ENCODE measurements at regions of chr2 and their contacts with region 1.

Region 1: GRCh38 chr2:55050133-55050994 is at the start of gene RTN4:
- DNase-seq: peak; percentile 99
- H3K4me3 Mint-ChIP-seq: peak within 1 kb of the TSS; percentile 85
- H3K27ac Mint-ChIP-seq: peak within 1 kb of the TSS; percentile 97
- H3K4me1 Mint-ChIP-seq: peaks cover 31% of the 10 kb centered on the region
- H3K27me3 Mint-ChIP-seq: no peaks in the 10 kb centered on the region
- CTCF ChIP-seq: no peak
- total RNA-seq, gene RTN4: 386 and 394 TPM in 2 replicates

Region 2: GRCh38 chr2:54979321-54980041 is 70.9 kb before region 1 on chr2:
- CTCF ChIA-PET with region 1: no interaction called
- intact Hi-C with region 1: no loop called
- DNase-seq: peak; percentile 58
- H3K4me3 Mint-ChIP-seq: no peak overlapping the region
- H3K27ac Mint-ChIP-seq: peak overlapping the region; percentile 51
- H3K4me1 Mint-ChIP-seq: peaks cover 49% of the 10 kb centered on the region
- H3K27me3 Mint-ChIP-seq: no peaks in the 10 kb centered on the region
- CTCF ChIP-seq: no peak

Region 3: DNA sequence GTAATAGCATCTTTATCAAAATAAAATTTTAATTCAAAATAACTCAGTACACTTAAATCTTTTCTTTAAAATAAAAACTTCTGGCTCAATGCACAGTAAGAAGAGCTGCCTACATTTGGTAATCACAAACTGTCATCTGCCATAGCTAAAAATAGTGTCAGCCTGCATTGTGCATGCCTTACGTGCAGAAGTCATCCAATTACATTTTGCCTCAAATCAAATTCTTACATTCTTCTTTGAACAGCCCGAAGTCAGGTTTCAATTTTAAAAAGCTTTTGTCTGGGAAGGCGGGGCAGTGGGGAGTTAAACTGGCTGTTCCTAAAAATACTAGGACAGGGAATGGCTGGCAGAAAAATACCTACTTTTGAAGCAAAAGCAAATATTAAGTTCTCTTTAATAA is 51.2 kb before region 1 on chr2:
- CTCF ChIA-PET with region 1: no interaction called
- intact Hi-C with region 1: no loop called
- DNase-seq: no peak
- H3K4me3 Mint-ChIP-seq: no peak overlapping the region
- H3K27ac Mint-ChIP-seq: no peak overlapping the region
- H3K4me1 Mint-ChIP-seq: peaks cover 76% of the 10 kb centered on the region
- H3K27me3 Mint-ChIP-seq: no peaks in the 10 kb centered on the region
- CTCF ChIP-seq: no peak

Region 4: GRCh38 chr2:55014962-55015939 is 35.1 kb before region 1 on chr2:
- CTCF ChIA-PET with region 1: interaction called, 10 read pairs
- intact Hi-C with region 1: loop called (anchors 2 kb)
- DNase-seq: peak; percentile 62
- H3K4me3 Mint-ChIP-seq: peak overlapping the region; percentile 45
- H3K27ac Mint-ChIP-seq: peak overlapping the region; percentile 37
- H3K4me1 Mint-ChIP-seq: peaks cover 59% of the 10 kb centered on the region
- H3K27me3 Mint-ChIP-seq: no peaks in the 10 kb centered on the region
- CTCF ChIP-seq: peak; percentile 56

Region 5: GRCh38 chr2:55099878-55100820 is 49.8 kb after region 1 on chr2:
- CTCF ChIA-PET with region 1: interaction called, 4 read pairs
- intact Hi-C with region 1: loop called (anchors 2 kb)
- DNase-seq: no peak
- H3K4me3 Mint-ChIP-seq: peak overlapping the region; percentile 24
- H3K27ac Mint-ChIP-seq: no peak overlapping the region
- H3K4me1 Mint-ChIP-seq: no peaks in the 10 kb centered on the region
- H3K27me3 Mint-ChIP-seq: no peaks in the 10 kb centered on the region
- CTCF ChIP-seq: no peak

Region 6: DNA sequence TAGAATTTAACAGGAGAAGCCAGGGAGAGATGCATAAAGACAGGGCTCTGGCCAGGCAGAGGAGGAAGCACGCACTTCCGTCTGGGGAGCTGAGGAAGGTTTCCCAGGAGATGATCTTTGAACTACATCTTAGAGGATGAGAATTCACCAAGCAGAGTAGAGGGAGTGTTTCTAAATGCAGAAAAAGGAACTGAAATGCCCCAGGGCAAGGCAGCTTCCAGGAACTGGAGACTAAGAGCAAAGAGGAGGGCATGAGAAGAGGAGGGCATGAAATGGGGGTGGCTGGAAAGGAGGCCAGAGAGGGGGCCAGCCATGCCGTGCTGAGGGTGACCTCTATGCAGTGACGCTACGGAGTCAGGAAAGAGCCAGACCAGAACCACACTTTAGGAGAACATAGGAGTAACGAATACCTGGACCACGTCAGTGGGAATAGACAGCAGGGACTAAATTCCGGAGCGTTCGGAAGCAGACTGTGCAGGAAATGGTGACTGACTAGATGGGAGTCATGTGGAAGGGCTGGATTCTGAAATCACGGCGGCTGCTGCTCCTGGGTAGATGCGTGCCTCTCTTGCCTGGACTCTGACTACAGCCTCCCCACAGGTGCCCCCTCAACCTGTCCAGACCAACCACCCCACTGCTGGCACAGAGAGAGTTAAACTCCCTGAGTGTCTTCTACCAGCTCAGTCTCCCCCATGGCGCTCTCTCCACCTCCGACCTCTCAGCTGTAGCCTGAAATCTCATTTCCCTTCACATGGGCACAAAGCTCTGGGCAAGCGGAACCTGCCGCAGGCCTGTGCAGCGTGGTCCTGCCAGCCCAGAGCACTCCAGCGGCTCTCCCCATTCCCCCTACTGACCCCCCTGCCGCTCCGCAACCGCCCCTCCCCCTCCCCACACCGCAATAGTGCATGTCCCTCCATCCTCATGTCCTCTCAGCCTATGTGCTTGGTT is 86.9 kb after region 1 on chr2:
- CTCF ChIA-PET with region 1: no interaction called
- intact Hi-C with region 1: no loop called
- DNase-seq: no peak
- H3K4me3 Mint-ChIP-seq: no peak overlapping the region
- H3K27ac Mint-ChIP-seq: no peak overlapping the region
- H3K4me1 Mint-ChIP-seq: peaks cover 56% of the 10 kb centered on the region
- H3K27me3 Mint-ChIP-seq: no peaks in the 10 kb centered on the region
- CTCF ChIP-seq: no peak

Region 7: GRCh38 chr2:55232084-55232862 is 181.9 kb after region 1 on chr2 and contains the starts of genes CLHC1 and RPS27A:
- CTCF ChIA-PET with region 1: no interaction called
- intact Hi-C with region 1: no loop called
- DNase-seq: peak; percentile 95
- H3K4me3 Mint-ChIP-seq: peak within 1 kb of the TSS; percentile 80
- H3K27ac Mint-ChIP-seq: peak within 1 kb of the TSS; percentile 92
- H3K4me1 Mint-ChIP-seq: peaks cover 27% of the 10 kb centered on the region
- H3K27me3 Mint-ChIP-seq: no peaks in the 10 kb centered on the region
- CTCF ChIP-seq: no peak
- total RNA-seq, gene CLHC1: 8.4 and 10.4 TPM in 2 replicates
- total RNA-seq, gene RPS27A: 702 and 747 TPM in 2 replicates

Measured in Calu3 (cell line).